A673 (cell line): ENCODE measurements at regions of chr11 and their contacts with region 1.

Region 1: GRCh38 chr11:128630367-128631230 is 43.2 kb upstream of the ETS1 start:
- DNase-seq: peak; percentile 85
- H3K4me3 ChIP-seq: no peak overlapping the region
- H3K27ac ChIP-seq: no peak overlapping the region
- H3K4me1 ChIP-seq: no peaks in the 10 kb centered on the region
- H3K27me3 ChIP-seq: peaks cover 35% of the 10 kb centered on the region
- CTCF ChIP-seq: peak; percentile 96

Region 2: GRCh38 chr11:128026596-128026995 is 604.0 kb before region 1 on chr11:
- CTCF ChIA-PET with region 1: no interaction called
- POLR2A ChIA-PET with region 1: no interaction called
- intact Hi-C with region 1: loop called (anchors 2 kb)
- DNase-seq: no peak
- H3K4me3 ChIP-seq: no peak overlapping the region
- H3K27ac ChIP-seq: no peak overlapping the region
- H3K4me1 ChIP-seq: no peaks in the 10 kb centered on the region
- H3K27me3 ChIP-seq: peaks cover 70% of the 10 kb centered on the region
- CTCF ChIP-seq: no peak

Region 3: DNA sequence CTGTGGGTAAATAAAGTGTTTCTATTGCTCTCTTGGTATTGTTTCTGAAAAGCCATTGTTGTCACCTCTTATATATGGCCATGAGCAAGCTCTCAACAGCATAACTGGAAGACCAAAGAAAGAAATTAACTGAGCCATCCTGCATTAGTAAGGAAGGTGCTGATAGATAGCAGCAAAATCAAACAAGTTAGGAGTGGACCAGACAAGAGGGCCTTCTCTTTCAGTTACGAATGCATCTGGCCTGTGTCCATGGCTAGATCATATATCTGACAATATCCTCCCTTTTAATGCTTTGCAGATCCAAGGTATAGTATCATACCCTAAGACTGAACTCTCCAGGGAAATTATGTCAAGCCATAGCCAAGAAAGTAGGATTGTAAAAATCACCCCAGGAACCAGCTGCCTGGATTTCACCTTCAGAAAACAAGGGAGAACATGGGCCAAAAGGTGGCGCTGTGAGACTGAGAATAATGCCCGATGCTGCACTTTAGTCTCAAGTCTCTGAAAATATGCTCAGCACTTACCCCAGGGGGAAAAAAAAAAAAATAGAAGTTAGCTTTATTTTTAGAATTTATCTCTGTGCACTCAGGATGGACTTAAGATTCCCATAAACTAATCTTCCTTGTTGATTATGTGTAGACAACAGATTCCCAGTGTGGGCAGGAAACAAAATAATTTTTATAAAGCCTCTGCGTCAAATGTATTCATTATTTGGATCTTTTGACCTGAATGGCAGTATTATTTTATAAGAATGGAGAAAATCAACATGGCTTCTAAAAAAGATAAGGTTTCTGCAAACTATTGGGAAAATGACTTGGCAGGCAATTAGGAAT is 458.3 kb before region 1 on chr11:
- CTCF ChIA-PET with region 1: interaction called, 25 read pairs
- POLR2A ChIA-PET with region 1: no interaction called
- intact Hi-C with region 1: loop called (anchors 1 kb)
- DNase-seq: peak; percentile 88
- H3K4me3 ChIP-seq: no peak overlapping the region
- H3K27ac ChIP-seq: no peak overlapping the region
- H3K4me1 ChIP-seq: peaks cover 9% of the 10 kb centered on the region
- H3K27me3 ChIP-seq: peaks cover 23% of the 10 kb centered on the region
- CTCF ChIP-seq: peak; percentile 91

Region 4: DNA sequence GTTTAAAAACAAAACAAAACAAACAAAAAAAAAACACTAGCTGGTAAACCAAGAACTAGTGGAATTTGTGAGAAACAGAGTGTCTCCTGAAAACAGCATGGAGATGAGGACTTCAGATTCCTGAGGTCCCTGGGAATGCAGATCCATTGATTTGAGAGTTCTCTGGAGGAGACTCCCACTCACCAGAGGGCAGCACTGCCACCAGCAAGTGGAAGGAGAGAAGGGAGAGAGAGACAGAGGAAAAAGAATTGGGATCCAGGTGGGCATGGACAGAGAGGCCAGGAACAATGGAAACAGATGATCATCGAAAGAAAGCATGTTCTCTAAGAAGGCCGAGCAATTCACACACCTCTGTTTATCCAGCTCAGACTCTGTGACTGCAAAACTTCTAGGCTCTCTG is 75.0 kb before region 1 on chr11:
- CTCF ChIA-PET with region 1: interaction called, 3 read pairs
- POLR2A ChIA-PET with region 1: no interaction called
- intact Hi-C with region 1: loop called (anchors 2 kb)
- DNase-seq: peak; percentile 24
- H3K4me3 ChIP-seq: no peak overlapping the region
- H3K27ac ChIP-seq: no peak overlapping the region
- H3K4me1 ChIP-seq: no peaks in the 10 kb centered on the region
- H3K27me3 ChIP-seq: peaks cover 30% of the 10 kb centered on the region
- CTCF ChIP-seq: peak; percentile 46

Region 5: DNA sequence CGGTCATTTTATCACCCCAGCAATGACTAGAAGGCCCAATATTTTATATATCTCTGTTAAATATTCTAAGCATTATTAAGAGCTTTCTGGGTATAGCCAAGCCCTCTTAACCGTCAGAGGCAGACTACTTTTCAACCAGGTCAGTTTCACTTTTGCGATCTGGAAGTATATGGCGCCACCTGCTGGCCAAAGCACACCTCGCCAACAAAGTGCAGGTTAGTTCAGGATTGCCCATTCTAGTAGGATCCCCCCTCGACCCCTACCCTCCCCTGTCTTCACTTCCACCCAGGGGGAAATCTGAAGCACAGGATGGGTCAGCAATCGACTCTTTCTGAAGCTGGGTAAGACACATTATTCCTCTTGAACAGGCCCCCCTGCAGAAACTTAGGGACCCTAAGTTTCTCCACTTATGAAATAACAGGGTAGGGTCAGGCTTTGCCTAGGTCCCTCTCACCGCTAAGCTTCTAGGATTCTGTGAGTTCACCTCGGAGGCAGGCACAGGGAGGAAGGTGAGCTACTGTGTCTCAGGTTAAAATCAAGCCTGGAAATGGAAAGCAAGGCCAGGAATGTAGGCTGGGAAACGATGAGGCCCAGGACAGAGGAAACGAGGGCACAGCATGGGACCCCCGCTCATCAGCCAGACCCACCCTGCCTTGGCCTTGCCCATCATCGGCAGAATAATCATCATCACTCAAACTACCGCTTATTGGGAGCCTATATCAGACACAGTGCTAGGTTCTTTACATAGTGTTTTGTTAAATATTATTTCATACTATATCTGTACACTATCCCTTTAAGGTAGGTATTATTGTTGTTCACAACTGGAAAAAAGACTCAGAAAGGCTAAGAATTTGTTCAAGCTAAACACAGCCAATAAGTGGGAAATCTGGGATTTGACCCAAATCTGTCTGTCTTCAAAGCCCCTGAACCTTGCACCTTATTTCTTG is 200.8 kb after region 1 on chr11:
- CTCF ChIA-PET with region 1: no interaction called
- POLR2A ChIA-PET with region 1: no interaction called
- intact Hi-C with region 1: loop called (anchors 10 kb)
- DNase-seq: peak; percentile 88
- H3K4me3 ChIP-seq: no peak overlapping the region
- H3K27ac ChIP-seq: no peak overlapping the region
- H3K4me1 ChIP-seq: peaks cover 17% of the 10 kb centered on the region
- H3K27me3 ChIP-seq: no peaks in the 10 kb centered on the region
- CTCF ChIP-seq: peak; percentile 98